Mammary epithelial cell (primary cell): ENCODE measurements at regions of chr12 and their contacts with region 1.

Region 1: GRCh38 chr12:102543494-102544485 is 63.4 kb upstream of the IGF1 start:
- DNase-seq: no peak
- H3K4me3 ChIP-seq: no peak overlapping the region
- H3K27ac ChIP-seq: no peak overlapping the region
- H3K4me1 ChIP-seq: no peaks in the 10 kb centered on the region
- H3K27me3 ChIP-seq: no peaks in the 10 kb centered on the region
- CTCF ChIP-seq: no peak

Region 2: DNA sequence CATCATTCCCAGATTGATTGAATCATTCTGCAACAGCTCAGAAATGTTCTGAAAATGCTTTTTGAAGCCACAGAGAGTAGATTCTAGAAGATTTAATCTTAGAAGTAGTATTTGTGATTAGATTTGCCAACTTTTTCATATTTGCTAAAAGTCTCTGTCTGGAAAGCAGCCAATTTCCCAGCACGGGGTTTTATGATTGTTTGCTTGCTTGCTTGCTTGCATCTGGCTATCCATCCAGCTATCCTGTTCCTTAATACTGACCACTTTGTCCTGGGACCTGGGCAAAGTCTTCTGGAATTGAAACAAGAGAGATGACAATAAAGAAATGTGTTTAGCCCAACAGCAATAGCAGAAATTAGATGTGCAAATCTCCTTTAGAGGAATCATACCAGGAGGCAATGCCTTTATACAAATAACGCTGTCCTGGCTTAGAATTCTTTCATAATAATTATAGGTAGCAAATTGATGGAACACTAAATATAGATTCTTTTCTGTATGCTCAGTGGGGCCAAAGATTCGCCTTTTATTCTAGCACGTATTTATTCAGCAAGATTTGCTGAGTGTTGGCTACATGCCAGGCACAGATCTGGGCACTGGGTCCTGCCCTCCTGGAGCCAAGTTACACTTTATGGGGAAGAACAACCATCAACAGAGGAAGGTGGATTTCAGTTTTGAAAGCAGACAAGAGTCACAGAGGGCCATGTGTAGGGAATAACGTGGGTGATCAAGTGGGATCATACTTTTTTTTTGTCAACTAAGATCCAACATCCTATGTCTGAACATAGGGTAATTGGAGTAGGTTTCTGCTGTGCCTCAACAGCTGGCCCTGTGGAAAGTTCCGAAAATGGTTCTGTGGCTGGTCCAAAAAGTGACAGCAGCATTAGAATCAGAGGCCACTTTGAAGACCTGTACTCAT is 923.7 kb before region 1 on chr12:
- CTCF ChIA-PET with region 1: interaction called, 24 read pairs
- dilution Hi-C with region 1: no loop called
- in situ Hi-C with region 1: no loop called
- intact Hi-C with region 1: no loop called
- DNase-seq: no peak
- H3K4me3 ChIP-seq: no peak overlapping the region
- H3K27ac ChIP-seq: no peak overlapping the region
- H3K4me1 ChIP-seq: no peaks in the 10 kb centered on the region
- H3K27me3 ChIP-seq: no peaks in the 10 kb centered on the region
- CTCF ChIP-seq: no peak